Activated naive CD4-positive, alpha-beta T cell treated with anti-CD3 and anti-CD28 coated beads, Interleukin-2, amount 10 ng/mL, durations not matched to agents 7 days and 5 days (primary cell): ENCODE measurements at regions of chr21 and their contacts with region 1.

Region 1: DNA sequence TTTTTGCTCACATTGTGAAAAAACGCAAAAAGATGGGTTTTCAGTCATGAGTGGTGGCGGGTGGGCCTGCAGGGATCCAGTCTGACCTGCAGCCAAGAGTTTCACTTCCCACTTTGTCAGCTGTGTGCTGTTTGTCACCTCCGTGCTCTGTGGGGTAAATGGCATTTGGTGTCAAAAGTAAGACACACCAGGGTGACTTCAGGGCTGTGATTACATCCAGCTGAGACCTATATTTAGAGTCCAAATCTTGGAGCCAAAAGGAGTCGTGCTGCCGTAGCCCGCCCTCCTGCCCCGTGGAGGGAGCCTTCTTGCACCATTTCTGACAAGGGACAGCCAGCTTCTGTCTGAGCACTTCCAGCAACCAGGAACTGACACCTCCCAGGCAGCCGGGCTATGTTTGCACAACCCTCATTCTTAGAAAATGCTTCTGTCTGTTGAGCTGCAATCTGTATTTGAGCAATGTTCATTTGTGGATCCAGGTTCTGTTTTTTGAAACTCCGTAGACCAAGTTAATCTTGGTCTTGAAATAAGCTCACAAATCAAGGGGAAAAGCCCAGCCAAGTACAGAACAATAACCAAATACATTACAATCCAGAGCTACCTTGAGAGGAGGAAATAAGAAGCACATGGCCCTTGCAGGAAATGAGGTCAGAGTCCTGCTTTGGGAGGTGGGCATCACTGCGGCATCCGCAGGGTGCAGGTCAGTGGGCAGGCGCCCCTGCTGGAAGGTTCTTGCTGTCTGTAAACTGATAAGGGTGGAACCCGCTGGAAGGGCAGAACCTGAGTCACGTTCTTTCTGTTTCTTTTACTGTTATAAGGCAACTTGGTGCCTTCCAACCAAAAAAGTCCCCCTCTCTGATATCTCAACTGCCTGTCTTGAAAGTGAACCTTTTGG is 14.4 kb downstream of the ABCG1 start:
- DNase-seq: peak; percentile 89
- H3K4me3 Mint-ChIP-seq: peak overlapping the region; percentile 36
- H3K27ac Mint-ChIP-seq: peak overlapping the region; percentile 97
- H3K4me1 Mint-ChIP-seq: peaks cover 97% of the 10 kb centered on the region
- H3K27me3 Mint-ChIP-seq: no peaks in the 10 kb centered on the region

Region 2: GRCh38 chr21:41832596-41833496 is 400.5 kb before region 1 on chr21:
- CTCF ChIA-PET with region 1: no interaction called
- DNase-seq: peak; percentile 19
- H3K4me3 Mint-ChIP-seq: no peak overlapping the region
- H3K27ac Mint-ChIP-seq: peak overlapping the region; percentile 3
- H3K4me1 Mint-ChIP-seq: peaks cover 2% of the 10 kb centered on the region
- H3K27me3 Mint-ChIP-seq: no peaks in the 10 kb centered on the region

Region 3: GRCh38 chr21:42220138-42220701 is 13.1 kb before region 1 on chr21:
- CTCF ChIA-PET with region 1: interaction called, 21 read pairs
- DNase-seq: peak; percentile 88
- H3K4me3 Mint-ChIP-seq: peak overlapping the region; percentile 84
- H3K27ac Mint-ChIP-seq: peak overlapping the region; percentile 89
- H3K4me1 Mint-ChIP-seq: peaks cover 37% of the 10 kb centered on the region
- H3K27me3 Mint-ChIP-seq: no peaks in the 10 kb centered on the region